Sigmoid colon (tissue), 7 donors: ENCODE measurements at regions of chr9 and their contacts with region 1.

Region 1: GRCh38 chr9:98488571-98489312 is 220.0 kb downstream of the GABBR2 start:
- DNase-seq: no peak
- H3K4me3 ChIP-seq: no peak overlapping the region
- H3K27ac ChIP-seq: no peak overlapping the region
- H3K4me1 ChIP-seq: no peaks in the 10 kb centered on the region
- H3K27me3 ChIP-seq: peaks cover 0 to 6% (median 0%) of the 10 kb centered on the region in 3 donors
- CTCF ChIP-seq: no peak
- EP300 ChIP-seq: no peak
- POLR2A ChIP-seq: no peak

Region 2: DNA sequence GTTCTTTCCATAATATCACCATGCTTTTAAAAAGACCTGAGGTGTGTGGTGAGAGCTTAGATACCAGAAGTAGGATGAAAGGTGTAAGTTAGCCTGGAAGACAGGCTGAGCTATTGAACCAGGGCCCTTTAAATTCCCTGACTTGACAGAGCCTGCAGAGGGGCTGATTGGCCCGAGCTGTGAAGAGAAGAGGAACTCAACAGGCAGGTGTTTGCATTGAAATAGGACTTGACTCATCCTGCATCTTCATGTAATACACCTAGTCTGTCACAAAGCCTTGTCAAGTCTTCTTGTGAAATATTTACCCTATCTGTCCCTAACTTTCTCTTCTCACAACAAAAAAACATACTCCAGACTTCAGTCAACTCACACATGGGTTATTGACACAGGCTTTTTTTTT is 522.2 kb before region 1 on chr9:
- intact Hi-C with region 1: no loop called
- DNase-seq: no peak
- H3K4me3 ChIP-seq: no peak overlapping the region
- H3K27ac ChIP-seq: no peak overlapping the region
- H3K4me1 ChIP-seq: no peaks in the 10 kb centered on the region
- H3K27me3 ChIP-seq: peaks cover 0 to 23% (median 0%) of the 10 kb centered on the region in 3 donors
- CTCF ChIP-seq: no peak
- EP300 ChIP-seq: no peak
- POLR2A ChIP-seq: no peak

Region 3: DNA sequence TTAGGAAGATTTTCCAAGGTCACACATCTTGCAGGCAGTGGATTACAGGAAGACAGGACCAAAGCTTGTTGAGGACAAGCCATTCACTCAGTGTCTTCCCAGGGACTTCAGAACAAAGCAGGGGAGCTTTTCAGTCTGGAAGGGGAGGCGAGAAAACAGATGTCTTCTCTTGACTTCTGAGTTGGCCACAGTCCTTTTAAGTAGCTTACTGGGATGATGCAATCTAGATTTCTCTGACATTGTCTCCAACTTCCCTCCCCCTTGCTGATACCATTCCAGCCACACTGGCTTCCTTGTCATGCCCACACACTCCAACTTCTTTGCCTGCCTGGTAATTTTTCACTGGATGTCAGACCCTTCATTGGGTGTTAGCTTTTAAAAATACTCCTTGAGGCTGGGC is 59.1 kb before region 1 on chr9:
- intact Hi-C with region 1: loop called (anchors 10 kb)
- DNase-seq: no peak
- H3K4me3 ChIP-seq: no peak overlapping the region
- H3K27ac ChIP-seq: no peak overlapping the region
- H3K4me1 ChIP-seq: no peaks in the 10 kb centered on the region
- H3K27me3 ChIP-seq: no peaks in the 10 kb centered on the region
- CTCF ChIP-seq: no peak
- EP300 ChIP-seq: no peak
- POLR2A ChIP-seq: no peak

Region 4: DNA sequence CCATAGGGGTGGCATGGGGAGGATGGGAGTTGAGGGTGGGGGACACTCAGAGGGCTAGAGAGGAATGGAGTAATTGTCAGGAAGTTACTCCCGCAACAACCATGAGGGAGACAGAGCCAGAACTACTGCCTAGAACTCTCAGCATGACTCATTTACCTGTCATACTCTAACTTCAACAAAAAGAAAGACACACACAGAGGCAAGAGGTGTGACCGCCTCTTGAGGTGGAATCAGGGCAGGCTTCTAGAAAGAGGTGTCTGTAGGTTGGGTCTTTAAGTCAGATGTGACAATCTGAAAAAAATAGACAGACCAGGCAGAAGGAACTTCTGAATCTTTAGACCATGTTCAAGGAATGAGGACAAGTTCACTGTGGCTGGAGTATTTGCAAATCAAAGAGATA is 146.6 kb after region 1 on chr9:
- intact Hi-C with region 1: no loop called
- DNase-seq: no peak
- H3K4me3 ChIP-seq: no peak overlapping the region
- H3K27ac ChIP-seq: no peak overlapping the region
- H3K4me1 ChIP-seq: no peaks in the 10 kb centered on the region
- H3K27me3 ChIP-seq: no peaks in the 10 kb centered on the region
- CTCF ChIP-seq: no peak
- EP300 ChIP-seq: no peak
- POLR2A ChIP-seq: no peak